ENCODE measurements at regions of chr17 and their contacts with region 1.

Region 1: DNA sequence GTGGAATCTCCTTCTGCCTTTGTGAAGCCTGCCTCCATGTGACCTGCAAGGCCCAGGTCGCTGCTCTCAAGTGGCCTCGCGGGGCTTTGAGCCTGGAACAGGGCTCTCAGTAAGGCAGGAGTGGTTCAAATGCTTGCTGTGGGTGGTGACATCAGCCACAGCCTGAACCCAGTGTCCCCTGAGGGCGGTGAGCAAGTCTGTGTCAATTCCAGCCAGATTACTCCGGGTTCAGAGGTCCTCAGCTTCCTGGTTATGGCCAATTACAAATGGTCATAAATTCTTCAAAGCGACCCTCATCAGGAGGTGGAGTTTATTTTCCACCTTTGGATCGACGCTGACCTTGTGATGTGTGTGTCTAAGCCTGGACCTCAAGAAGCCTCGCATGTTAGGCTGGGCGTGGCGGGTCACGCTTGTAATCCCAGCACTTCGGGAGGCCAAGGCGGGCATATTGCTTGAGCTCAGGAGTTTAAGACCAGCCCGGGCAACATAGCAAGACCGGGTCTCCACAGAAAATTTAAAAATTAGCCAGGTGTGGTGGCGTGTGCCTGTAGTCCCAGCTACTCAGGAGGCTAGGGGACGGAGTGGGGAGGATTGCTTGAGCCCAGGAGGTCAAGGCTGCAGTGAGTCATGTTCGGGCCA is 17.3 kb downstream of the LGALS3BP start:
- DNase-seq: peak; percentile 51 to 76
- ATAC-seq: peak; percentile 87

Region 2: GRCh38 chr17:78879635-78880186 is 82.8 kb before region 1 on chr17:
- intact Hi-C with region 1: loop called in 1 of 2 experiments (anchors 10 kb)
- DNase-seq: peak in 1 of 2 donors; percentile 56
- ATAC-seq: no peak

Region 3: GRCh38 chr17:79009397-79010308 is 47.2 kb after region 1 on chr17 and contains the start of gene CANT1:
- intact Hi-C with region 1: no loop called
- DNase-seq: peak; percentile 71 to 89
- ATAC-seq: peak; percentile 56
- total RNA-seq, gene CANT1: 302 to 322 TPM

Region 4: GRCh38 chr17:79126139-79126538 is 163.7 kb after region 1 on chr17:
- intact Hi-C with region 1: no loop called
- DNase-seq: peak in 1 of 2 donors; percentile 51
- ATAC-seq: peak; percentile 71

Region 5: GRCh38 chr17:79160980-79161636 is 198.6 kb after region 1 on chr17:
- intact Hi-C with region 1: no loop called
- DNase-seq: no peak
- ATAC-seq: peak; percentile 47

Measured in left colon (tissue), 2 donors.